ENCODE measurements at regions of chr1 and their contacts with region 1.

Region 1: GRCh38 chr1:92994105-92994712 is 32.9 kb upstream of the DIPK1A start:
- DNase-seq: peak; percentile 85
- ATAC-seq: peak; percentile 78
- H3K4me3 Mint-ChIP-seq: no peak overlapping the region
- H3K27ac Mint-ChIP-seq: peak overlapping the region; percentile 22
- H3K4me1 Mint-ChIP-seq: peaks cover 47% of the 10 kb centered on the region
- H3K27me3 Mint-ChIP-seq: no peaks in the 10 kb centered on the region
- CTCF ChIP-seq: peak; percentile 92

Region 2: GRCh38 chr1:92843429-92844352 is 150.5 kb before region 1 on chr1:
- CTCF ChIA-PET with region 1: interaction called, 14 read pairs
- POLR2A ChIA-PET with region 1: interaction called, 3 read pairs
- intact Hi-C with region 1: no loop called
- DNase-seq: no peak
- ATAC-seq: no peak
- H3K4me3 Mint-ChIP-seq: no peak overlapping the region
- H3K27ac Mint-ChIP-seq: no peak overlapping the region
- H3K4me1 Mint-ChIP-seq: peaks cover 21% of the 10 kb centered on the region
- H3K27me3 Mint-ChIP-seq: no peaks in the 10 kb centered on the region
- CTCF ChIP-seq: no peak

Region 3: GRCh38 chr1:92877792-92878191 is 116.4 kb before region 1 on chr1:
- CTCF ChIA-PET with region 1: interaction called, 36 read pairs
- POLR2A ChIA-PET with region 1: interaction called, 3 read pairs
- intact Hi-C with region 1: no loop called
- DNase-seq: no peak
- ATAC-seq: peak; percentile 66
- H3K4me3 Mint-ChIP-seq: peak overlapping the region; percentile 34
- H3K27ac Mint-ChIP-seq: peak overlapping the region; percentile 84
- H3K4me1 Mint-ChIP-seq: peaks cover 25% of the 10 kb centered on the region
- H3K27me3 Mint-ChIP-seq: no peaks in the 10 kb centered on the region
- CTCF ChIP-seq: no peak

Region 4: DNA sequence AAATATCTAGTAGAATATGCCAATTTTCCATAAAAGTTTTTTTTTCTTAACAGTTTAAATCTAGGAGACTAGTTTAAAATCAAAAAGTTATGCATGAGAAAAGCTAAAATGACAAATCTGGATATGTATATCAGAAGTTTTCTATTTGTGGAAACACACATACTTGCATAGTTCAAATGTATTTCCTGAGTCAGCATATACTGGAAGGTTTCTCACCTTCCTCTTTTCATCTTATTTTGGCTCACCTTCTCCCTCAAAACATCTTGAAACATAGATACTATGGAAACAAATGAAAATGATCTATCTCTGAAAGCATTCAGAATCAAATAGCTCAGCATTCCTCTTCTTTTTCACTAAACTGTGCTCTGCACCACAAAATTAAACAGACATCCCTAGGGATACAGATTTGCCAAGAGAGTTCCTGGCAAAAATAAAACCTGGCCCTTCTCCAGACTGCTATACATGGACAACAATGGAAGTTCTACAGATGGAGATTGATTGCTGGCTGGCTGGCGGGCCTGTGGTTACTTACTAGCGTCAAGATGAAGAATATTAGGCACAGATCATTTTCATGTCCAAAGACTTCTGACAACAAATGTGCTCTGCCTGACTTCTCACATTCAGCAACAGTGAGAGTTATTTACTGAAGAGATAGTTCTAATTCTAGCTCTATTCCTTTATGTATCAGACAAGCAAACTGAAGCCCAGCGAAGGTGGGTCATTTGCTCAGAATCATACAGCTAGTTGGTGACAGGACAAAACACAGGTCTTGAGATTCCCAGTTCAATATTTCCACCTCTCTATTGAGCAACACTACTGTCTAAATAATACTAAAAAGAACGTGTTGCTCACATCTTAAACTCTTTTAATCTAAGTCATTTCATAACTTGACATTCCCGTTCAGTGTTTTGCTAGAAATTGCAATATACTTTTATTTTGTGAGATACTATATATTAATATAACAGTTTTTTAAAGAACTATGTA is 59.5 kb before region 1 on chr1:
- CTCF ChIA-PET with region 1: interaction called, 11 read pairs
- POLR2A ChIA-PET with region 1: interaction called, 3 read pairs
- intact Hi-C with region 1: no loop called
- DNase-seq: no peak
- ATAC-seq: no peak
- H3K4me3 Mint-ChIP-seq: no peak overlapping the region
- H3K27ac Mint-ChIP-seq: no peak overlapping the region
- H3K4me1 Mint-ChIP-seq: peaks cover 45% of the 10 kb centered on the region
- H3K27me3 Mint-ChIP-seq: no peaks in the 10 kb centered on the region
- CTCF ChIP-seq: no peak

Region 5: DNA sequence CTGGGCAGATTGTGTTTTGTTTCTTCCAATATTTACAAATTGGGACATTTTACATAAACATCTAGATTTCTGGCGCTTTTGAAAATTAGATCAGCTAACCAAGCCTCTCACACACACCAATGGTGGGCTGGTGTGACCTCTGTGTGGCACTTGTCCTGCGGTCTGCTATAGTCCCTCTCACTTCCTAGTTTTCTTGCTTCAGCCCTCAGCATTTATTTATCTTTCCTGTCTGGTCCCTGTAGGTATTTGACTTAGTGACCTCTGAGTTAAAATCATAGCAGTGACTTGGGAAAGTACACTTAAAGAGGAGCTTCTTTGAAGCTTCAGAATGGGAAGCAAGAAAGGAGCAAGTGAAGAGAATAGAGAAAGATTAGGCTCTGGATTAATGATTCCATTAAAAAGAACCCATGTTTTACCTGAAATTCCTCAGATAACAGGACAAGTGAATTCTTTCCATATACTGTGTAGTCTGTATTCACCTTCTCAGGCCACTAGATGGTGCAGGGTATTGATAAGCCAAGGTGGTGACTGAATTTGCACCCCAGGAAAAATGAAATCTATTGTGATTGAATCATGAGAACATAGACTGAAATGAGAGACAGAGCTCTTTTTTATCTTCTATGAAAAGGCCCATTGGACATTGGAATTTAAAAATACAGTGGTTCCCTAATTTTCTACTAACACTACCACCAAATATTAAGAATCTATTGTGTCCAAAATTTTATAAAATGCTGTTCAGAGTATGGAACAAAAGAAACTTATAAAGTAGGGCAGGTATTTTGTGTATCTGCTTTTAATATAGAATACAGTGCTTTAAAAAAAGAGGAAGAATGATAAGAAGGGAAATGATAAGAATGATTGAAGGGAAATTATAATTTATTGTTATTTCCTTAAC is 25.8 kb before region 1 on chr1:
- CTCF ChIA-PET with region 1: interaction called, 492 read pairs
- POLR2A ChIA-PET with region 1: interaction called, 28 read pairs
- intact Hi-C with region 1: loop called (anchors 1 kb)
- DNase-seq: no peak
- ATAC-seq: peak; percentile 64
- H3K4me3 Mint-ChIP-seq: no peak overlapping the region
- H3K27ac Mint-ChIP-seq: peak overlapping the region; percentile 36
- H3K4me1 Mint-ChIP-seq: peaks cover 36% of the 10 kb centered on the region
- H3K27me3 Mint-ChIP-seq: no peaks in the 10 kb centered on the region
- CTCF ChIP-seq: peak; percentile 84

Region 6: GRCh38 chr1:93015590-93015989 is 21.4 kb after region 1 on chr1:
- CTCF ChIA-PET with region 1: interaction called, 16 read pairs
- POLR2A ChIA-PET with region 1: no interaction called
- intact Hi-C with region 1: no loop called
- DNase-seq: no peak
- ATAC-seq: no peak
- H3K4me3 Mint-ChIP-seq: no peak overlapping the region
- H3K27ac Mint-ChIP-seq: no peak overlapping the region
- H3K4me1 Mint-ChIP-seq: no peaks in the 10 kb centered on the region
- H3K27me3 Mint-ChIP-seq: peaks cover 2% of the 10 kb centered on the region
- CTCF ChIP-seq: no peak